Activated naive CD4-positive, alpha-beta T cell treated with anti-CD3 and anti-CD28 coated beads, Interleukin-2, amount 10 ng/mL, durations not matched to agents 7 days and 5 days (primary cell): ENCODE measurements at regions of chr3 and their contacts with region 1.

Region 1: GRCh38 chr3:187164885-187165543 is 25.7 kb upstream of the RPL39L start:
- DNase-seq: peak; percentile 40
- H3K4me3 Mint-ChIP-seq: no peak overlapping the region
- H3K27ac Mint-ChIP-seq: no peak overlapping the region
- H3K4me1 Mint-ChIP-seq: peaks cover 4% of the 10 kb centered on the region
- H3K27me3 Mint-ChIP-seq: peaks cover 34% of the 10 kb centered on the region

Region 2: DNA sequence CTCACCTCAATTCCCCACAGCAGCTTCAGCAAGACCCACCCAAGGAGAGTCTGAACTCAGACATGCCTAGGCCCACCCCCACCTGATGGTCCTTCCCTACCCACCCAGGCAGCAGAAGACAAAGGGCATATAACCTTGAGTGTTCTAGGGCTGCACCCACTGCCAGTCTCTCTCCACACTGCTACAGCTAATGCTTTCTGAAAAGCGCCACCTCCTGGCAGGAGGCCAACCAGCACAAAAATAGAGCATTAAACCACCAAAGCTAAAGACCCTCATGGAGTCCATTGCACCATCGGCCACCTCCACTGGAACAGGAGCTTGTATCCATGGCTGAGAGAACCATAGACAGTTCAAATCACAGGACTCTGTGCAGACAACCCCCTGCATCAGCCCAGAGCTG is 14.4 kb before region 1 on chr3:
- CTCF ChIA-PET with region 1: interaction called, 38 read pairs
- DNase-seq: peak; percentile 73
- H3K4me3 Mint-ChIP-seq: no peak overlapping the region
- H3K27ac Mint-ChIP-seq: no peak overlapping the region
- H3K4me1 Mint-ChIP-seq: peaks cover 6% of the 10 kb centered on the region
- H3K27me3 Mint-ChIP-seq: peaks cover 57% of the 10 kb centered on the region